ENCODE measurements at regions of chr3 and their contacts with region 1.

Region 1: DNA sequence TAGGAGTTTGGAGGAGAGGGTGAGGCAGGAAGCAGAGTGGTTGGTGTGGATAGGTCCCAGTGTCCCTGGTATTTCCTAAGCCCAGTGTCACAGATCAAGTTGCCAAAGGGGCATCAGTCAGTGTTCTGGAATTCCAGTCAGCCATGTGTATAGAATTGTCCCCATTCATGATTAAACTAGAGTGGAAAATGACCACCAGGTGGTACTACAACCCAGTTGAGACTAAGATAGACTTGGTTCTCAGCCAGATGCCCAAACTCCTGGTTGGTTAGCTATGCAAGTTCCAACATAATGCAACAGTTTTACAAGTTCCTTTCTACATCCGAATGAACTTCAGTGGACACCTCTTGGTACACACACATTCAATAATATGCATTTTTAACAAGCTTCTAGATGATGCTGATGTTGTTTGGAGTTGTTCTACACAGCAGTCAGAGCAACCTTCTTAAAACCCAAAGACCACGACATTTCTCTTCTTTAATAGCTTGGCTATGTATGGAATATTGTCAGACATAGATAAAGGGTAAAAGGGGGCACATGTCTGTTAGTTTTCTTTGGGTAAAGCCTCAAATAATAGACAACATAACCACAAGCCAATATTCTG is 8.4 kb upstream of the ATR start:
- DNase-seq: peak; percentile 79
- H3K4me3 ChIP-seq: no peak overlapping the region
- H3K27ac ChIP-seq: no peak overlapping the region
- H3K4me1 ChIP-seq: no peaks in the 10 kb centered on the region
- H3K27me3 ChIP-seq: peaks cover 8 to 14% of the 10 kb centered on the region in 2 experiments
- CTCF ChIP-seq: peak; percentile 46 to 57
- POLR2A ChIP-seq: no peak

Region 2: GRCh38 chr3:142680710-142681109 is 93.8 kb after region 1 on chr3:
- CTCF ChIA-PET with region 1: interaction called, 29 read pairs
- POLR2A ChIA-PET with region 1: no interaction called
- dilution Hi-C with region 1: no loop called
- intact Hi-C with region 1: no loop called
- DNase-seq: no peak
- H3K4me3 ChIP-seq: no peak overlapping the region
- H3K27ac ChIP-seq: no peak overlapping the region
- H3K4me1 ChIP-seq: no peaks in the 10 kb centered on the region
- H3K27me3 ChIP-seq: no peaks in the 10 kb centered on the region
- CTCF ChIP-seq: no peak
- POLR2A ChIP-seq: no peak

Region 3: GRCh38 chr3:142723968-142724681 is 137.2 kb after region 1 on chr3 and contains the start of gene TRPC1:
- CTCF ChIA-PET with region 1: interaction called, 9 read pairs
- POLR2A ChIA-PET with region 1: no interaction called
- dilution Hi-C with region 1: no loop called
- intact Hi-C with region 1: loop called (anchors 2 kb)
- DNase-seq: peak; percentile 80
- H3K4me3 ChIP-seq: peak within 1 kb of the TSS; percentile 25 to 79 (median 68)
- H3K27ac ChIP-seq: peak within 1 kb of the TSS; percentile 72
- H3K4me1 ChIP-seq: peaks cover 7% of the 10 kb centered on the region
- H3K27me3 ChIP-seq: no peaks in the 10 kb centered on the region
- CTCF ChIP-seq: no peak
- POLR2A ChIP-seq: peak; percentile 69
- total RNA-seq, gene TRPC1: 5.6 and 5.9 TPM in 2 replicates

Region 4: GRCh38 chr3:142929109-142929508 is 342.2 kb after region 1 on chr3:
- CTCF ChIA-PET with region 1: interaction called, 6 read pairs
- POLR2A ChIA-PET with region 1: no interaction called
- dilution Hi-C with region 1: no loop called
- intact Hi-C with region 1: loop called (anchors 5 kb)
- DNase-seq: peak; percentile 21
- H3K4me3 ChIP-seq: no peak overlapping the region
- H3K27ac ChIP-seq: no peak overlapping the region
- H3K4me1 ChIP-seq: no peaks in the 10 kb centered on the region
- H3K27me3 ChIP-seq: peaks cover 7 to 16% of the 10 kb centered on the region in 2 experiments
- CTCF ChIP-seq: peak; percentile 37 to 47
- POLR2A ChIP-seq: no peak

Region 5: GRCh38 chr3:142987080-142987700 is 400.3 kb after region 1 on chr3:
- CTCF ChIA-PET with region 1: interaction called, 26 read pairs
- POLR2A ChIA-PET with region 1: no interaction called
- dilution Hi-C with region 1: no loop called
- intact Hi-C with region 1: loop called (anchors 1 kb)
- DNase-seq: peak; percentile 51
- H3K4me3 ChIP-seq: no peak overlapping the region
- H3K27ac ChIP-seq: no peak overlapping the region
- H3K4me1 ChIP-seq: no peaks in the 10 kb centered on the region
- H3K27me3 ChIP-seq: peaks cover 8 to 15% of the 10 kb centered on the region in 2 experiments
- CTCF ChIP-seq: peak; percentile 37
- POLR2A ChIP-seq: no peak

Region 6: GRCh38 chr3:142993958-142994442 is 407.1 kb after region 1 on chr3:
- CTCF ChIA-PET with region 1: interaction called, 26 read pairs
- POLR2A ChIA-PET with region 1: no interaction called
- dilution Hi-C with region 1: no loop called
- intact Hi-C with region 1: loop called (anchors 1 kb)
- DNase-seq: peak; percentile 61
- H3K4me3 ChIP-seq: no peak overlapping the region
- H3K27ac ChIP-seq: no peak overlapping the region
- H3K4me1 ChIP-seq: no peaks in the 10 kb centered on the region
- H3K27me3 ChIP-seq: peaks cover 6 to 12% of the 10 kb centered on the region in 2 experiments
- CTCF ChIP-seq: peak; percentile 54 to 56
- POLR2A ChIP-seq: no peak